Tibial artery (tissue), 4 donors: ENCODE measurements at regions of chr11 and their contacts with region 1.

Region 1: DNA sequence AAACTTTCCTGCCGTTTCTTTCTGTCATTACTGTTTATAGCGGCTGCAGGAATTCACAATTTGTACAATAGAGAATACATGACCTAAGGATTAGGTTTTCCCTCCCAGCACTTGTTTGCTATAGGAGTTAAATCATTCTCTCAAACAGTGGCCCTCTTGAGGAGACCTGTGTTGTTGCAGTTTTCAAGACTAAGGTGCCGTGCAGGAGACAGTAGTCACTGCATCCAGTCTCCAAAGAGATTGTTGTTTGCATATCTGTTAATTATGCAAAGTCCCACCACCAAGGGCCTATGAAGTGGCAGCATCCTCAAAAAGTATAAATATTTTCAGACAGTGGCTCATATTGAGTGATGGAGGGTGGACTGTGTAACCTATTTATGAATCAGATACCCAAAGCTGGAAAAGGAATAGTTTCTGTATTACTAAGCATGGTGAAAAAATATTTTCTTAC is 2.3 kb downstream of the PRSS23 start:
- DNase-seq: no peak
- H3K4me3 ChIP-seq: peak overlapping the region; percentile 91 to 94
- H3K27ac ChIP-seq: peak overlapping the region; percentile 87 to 92
- H3K4me1 ChIP-seq: peaks cover 0 to 65% (median 34%) of the 10 kb centered on the region in 4 donors
- H3K27me3 ChIP-seq: no peaks in the 10 kb centered on the region
- CTCF ChIP-seq: peak; percentile 59

Region 2: DNA sequence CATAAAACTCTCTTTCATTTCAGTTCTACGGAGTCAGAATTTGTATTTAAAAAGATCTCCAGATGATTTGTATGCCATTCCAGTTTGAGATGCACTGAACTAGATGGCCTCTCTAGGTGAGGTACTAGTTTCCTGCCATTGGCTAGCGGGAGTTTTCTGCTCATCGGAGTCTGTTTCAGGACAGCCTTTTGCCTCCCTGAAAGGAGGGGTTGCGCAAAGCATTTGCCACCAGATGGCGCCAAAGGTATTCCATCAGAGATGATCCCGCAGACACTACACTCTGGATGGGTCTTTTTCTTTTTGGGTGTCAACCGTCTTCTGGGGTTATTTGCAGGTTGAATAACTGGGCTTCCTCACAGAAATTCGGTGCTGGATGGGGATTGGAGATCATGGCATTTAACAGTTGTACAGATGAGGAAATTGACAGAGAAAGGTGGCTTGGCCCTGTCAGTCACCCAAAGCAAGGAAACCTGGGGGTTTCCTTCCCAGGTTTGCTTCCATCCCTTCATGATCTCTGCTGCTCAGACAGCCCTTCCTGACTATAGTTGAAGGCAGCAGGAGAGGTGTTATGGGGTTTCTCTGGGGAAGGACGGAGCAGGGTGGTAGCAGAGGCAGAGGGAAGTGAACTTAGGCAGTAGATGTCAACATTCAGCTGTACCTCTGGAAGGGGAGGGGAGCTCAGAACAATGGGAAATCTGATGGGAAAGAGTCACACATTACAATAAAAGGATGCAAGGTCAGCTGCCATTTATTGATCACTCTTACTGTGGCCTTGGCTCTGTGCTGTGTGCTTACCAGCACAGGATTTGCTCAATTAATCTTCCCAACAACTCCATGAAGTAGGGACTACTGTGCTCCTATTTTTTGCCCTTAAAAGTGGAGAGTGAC is 346.3 kb before region 1 on chr11:
- intact Hi-C with region 1: loop called (anchors 5 kb)
- DNase-seq: peak; percentile 89 to 90
- H3K4me3 ChIP-seq: no peak overlapping the region
- H3K27ac ChIP-seq: peak overlapping the region; percentile 57 to 64
- H3K4me1 ChIP-seq: peaks cover 0 to 45% (median 41%) of the 10 kb centered on the region in 4 donors
- H3K27me3 ChIP-seq: no peaks in the 10 kb centered on the region
- CTCF ChIP-seq: peak; percentile 86 to 92

Region 3: GRCh38 chr11:86632499-86633269 is 169.9 kb before region 1 on chr11:
- intact Hi-C with region 1: loop called (anchors 5 kb)
- DNase-seq: peak; percentile 41 to 75
- H3K4me3 ChIP-seq: no peak overlapping the region
- H3K27ac ChIP-seq: peak overlapping the region; percentile 40 to 81
- H3K4me1 ChIP-seq: peaks cover 0 to 65% (median 52%) of the 10 kb centered on the region in 4 donors
- H3K27me3 ChIP-seq: no peaks in the 10 kb centered on the region
- CTCF ChIP-seq: peak; percentile 38 to 52

Region 4: DNA sequence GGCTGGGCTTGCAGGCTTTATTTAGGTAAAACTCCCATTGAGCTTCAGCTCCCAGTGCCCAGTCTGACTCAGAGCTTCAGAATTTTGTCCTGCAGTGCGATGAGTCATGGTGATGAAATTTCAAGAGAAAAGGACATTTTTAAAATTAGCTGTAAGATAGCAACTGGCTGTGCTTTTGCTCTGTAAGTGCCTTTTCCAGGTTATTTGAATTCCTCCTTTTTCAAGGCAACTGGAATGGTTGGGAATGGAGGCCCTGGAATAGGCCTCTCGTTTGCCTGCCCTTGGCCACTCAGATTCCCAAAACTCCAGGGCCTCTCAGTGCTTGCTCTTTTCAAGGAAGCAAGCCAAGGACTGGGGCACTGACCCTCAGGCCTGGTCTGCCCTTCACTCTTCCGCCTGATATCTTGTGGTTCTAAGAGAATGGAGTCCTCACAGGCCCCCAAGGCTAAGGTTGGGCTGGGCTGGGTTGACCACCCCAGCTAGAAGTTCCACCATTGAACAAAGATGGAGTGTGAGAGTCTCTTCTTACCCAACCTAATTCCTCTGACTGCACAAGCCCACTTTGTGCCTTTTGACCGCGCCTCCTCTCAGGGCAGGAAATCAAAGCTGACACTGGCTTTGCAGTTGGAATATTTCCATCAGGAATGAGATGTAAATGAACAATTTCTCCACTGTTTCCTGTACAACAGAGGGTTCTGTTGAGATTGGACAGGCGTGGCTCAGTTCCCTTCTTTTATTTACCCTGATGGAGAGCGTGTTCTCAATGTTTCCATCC is 61.7 kb before region 1 on chr11:
- intact Hi-C with region 1: loop called (anchors 5 kb)
- DNase-seq: peak; percentile 70 to 86
- H3K4me3 ChIP-seq: no peak overlapping the region
- H3K27ac ChIP-seq: peak overlapping the region; percentile 86
- H3K4me1 ChIP-seq: peaks cover 0 to 74% (median 52%) of the 10 kb centered on the region in 4 donors
- H3K27me3 ChIP-seq: no peaks in the 10 kb centered on the region
- CTCF ChIP-seq: no peak